GM10248 (cell line): ENCODE measurements at regions of chr14 and their contacts with region 1.

Region 1: DNA sequence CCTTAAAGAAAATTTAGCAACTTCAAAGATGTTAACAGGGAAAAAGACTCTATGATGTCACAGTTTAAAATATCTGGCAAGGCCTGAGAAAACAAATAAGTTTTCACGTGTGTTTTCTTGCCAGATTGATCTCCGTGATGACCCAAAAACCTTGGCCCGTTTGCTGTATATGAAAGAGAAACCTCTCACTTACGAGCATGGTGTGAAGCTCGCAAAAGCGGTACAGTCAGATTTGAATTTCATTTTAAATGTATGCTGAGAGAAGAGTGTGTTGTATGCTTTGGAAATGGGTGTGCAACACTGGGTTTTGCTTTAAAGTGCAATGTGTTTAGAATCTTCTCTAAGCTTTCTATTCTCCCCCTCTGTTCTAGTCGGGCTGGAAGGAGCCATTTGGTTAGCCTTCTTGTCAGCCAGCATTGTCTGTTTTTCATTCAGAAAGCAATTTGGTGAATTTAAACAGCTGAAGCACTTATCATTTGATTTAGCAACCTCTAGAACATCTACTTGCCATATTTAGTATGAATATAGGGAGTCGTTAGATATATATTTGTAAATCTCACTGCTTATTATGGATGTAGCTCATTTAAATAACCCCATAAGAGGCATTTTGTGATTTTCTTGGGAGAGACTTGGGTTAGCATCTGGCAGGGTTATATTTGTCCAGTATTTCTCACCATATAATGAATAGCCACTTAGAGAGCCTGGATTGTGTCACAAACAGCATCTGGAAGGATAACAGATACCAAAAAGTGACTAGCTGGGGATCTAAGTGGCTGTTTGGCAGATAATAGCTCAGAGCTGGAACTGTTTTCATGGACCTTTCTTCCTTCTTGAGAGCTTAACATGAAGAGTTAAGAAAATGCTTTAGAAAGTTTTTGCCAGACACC is 35.5 kb downstream of the GPHB5 start:
- DNase-seq: no peak
- CTCF ChIP-seq: no peak

Region 2: DNA sequence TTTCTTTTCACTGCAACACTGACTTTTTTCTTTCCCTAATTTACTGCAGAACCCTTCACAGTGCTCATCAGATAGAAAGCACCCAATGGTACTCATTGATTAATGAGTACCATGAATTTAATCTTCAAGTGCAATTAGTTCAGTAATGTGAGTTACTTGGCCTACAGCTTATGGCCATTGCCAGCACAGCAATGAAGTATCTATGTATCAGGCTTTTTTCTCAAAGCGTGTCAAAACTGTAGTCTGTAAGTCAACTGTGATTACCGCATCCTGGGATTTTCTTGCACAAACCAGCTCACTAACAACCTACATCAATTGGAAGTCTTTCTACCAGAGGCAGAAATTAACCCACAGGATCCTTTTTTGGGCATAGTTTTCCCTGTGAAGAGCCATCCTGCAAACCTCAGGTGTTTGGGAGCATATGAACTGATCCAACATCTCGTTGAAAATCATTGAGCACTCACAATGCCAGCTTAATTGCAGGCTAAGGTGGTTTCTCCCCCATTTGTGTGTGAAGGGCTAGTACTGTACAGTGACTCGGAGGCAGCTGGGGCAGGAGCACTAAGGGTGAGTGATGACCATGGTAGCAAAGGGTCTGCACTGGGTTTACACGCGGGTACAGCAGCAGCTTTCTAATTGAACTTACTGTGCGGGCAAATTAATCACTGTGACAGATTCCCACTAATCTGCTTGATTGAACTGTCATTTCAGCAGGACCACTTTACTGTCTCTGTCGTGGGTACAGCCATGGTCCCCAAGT is 901.7 kb before region 1 on chr14:
- CTCF ChIA-PET with region 1: no interaction called
- POLR2A ChIA-PET with region 1: no interaction called
- DNase-seq: no peak
- CTCF ChIP-seq: no peak

Region 3: DNA sequence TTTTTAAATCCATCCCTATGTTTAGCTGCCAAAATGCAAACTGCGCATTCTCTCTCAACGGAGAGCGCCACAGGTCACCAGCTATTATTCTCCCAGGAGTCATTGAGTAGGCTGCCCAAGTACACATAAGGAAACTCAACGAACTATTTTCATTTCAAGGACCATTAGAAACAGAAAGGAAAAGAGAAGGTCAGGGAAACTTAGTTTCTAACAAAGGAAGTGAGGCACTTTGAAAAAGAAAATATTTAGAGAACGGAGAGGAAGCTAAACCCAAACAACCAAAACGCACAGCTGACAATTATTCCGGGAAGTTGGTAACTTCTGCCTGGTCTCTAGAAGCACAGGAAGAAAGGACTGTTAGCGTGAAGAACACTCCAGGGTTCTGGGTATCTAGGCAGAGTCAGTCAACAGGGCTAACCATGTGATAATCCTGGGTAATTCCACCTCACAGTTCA is 12.0 kb after region 1 on chr14:
- CTCF ChIA-PET with region 1: interaction called, 19 read pairs
- POLR2A ChIA-PET with region 1: no interaction called
- DNase-seq: no peak
- CTCF ChIP-seq: no peak

Region 4: GRCh38 chr14:63401646-63402045 is 118.4 kb after region 1 on chr14:
- CTCF ChIA-PET with region 1: no interaction called
- POLR2A ChIA-PET with region 1: no interaction called
- DNase-seq: no peak
- CTCF ChIP-seq: no peak